ENCODE measurements at regions of chr6 and their contacts with region 1.

Region 1: DNA sequence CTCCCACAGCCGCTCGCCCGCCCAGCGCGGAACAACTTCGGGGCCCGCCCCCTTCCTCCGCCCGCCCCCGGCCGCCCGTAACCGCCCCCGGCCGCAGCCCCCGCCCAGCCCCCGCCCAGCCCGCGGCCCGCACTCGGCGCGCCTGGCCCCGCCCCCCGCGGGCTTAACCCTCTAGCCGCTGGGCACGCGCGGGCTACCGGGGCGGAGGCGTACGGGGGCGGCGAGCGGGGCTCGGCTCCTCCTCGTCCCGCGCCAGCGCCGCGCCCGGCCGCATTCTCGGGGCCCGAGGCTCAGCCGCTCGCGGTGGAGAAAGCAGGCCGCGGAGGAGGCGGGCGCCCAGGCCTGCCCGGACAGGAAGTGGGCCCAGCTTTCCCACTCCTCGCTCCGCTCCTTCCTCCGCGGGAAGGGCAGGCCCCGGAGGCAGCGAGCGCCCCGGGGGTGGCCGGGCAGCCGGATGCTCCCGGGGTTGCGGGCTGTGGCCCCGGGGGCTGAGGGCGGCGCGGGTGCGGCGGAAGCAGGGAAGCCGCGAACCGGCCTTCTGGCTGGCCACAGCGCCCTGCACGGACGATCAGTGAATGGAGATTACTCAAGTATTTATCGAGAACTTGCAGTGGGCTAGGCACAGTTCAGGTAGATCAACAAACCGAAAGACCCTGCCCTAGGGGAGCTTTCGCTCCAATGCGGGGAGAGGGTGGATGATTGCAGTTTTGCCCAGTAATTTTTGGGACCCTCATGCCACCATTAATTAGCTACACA is at the start of gene TRAM2:
- DNase-seq: peak; percentile 39 to 86 (median 63)
- H3K4me3 ChIP-seq: peak within 1 kb of the TSS; percentile 57 to 97 (median 86)
- H3K27ac ChIP-seq: peak within 1 kb of the TSS; percentile 46 to 98 (median 93)
- H3K27me3 ChIP-seq: no peaks in the 10 kb centered on the region
- CTCF ChIP-seq: peak in 18 of 56 donors; percentile 5 to 35 (median 14)
- total RNA-seq, gene TRAM2: 2.9 to 8.9 (median 5.2) TPM

Region 2: GRCh38 chr6:52650941-52651340 is 73.7 kb after region 1 on chr6:
- intact Hi-C with region 1: loop called in 1 of 2 experiments (anchors 5 kb)
- DNase-seq: no peak
- H3K4me3 ChIP-seq: no peak overlapping the region
- H3K27ac ChIP-seq: no peak overlapping the region
- H3K27me3 ChIP-seq: peaks cover 0 to 12% (median 0%) of the 10 kb centered on the region in 45 donors
- CTCF ChIP-seq: no peak

Region 3: GRCh38 chr6:52664186-52664990 is 87.2 kb after region 1 on chr6:
- intact Hi-C with region 1: loop called in 1 of 2 experiments (anchors 10 kb)
- DNase-seq: peak; percentile 65 to 94 (median 90)
- H3K4me3 ChIP-seq: peak overlapping the region; percentile 60 to 97 (median 79)
- H3K27ac ChIP-seq: peak overlapping the region in 28 of 59 donors; percentile 1 to 76 (median 50)
- H3K27me3 ChIP-seq: no peaks in the 10 kb centered on the region
- CTCF ChIP-seq: no peak

Region 4: GRCh38 chr6:52779237-52779636 is 202.0 kb after region 1 on chr6:
- intact Hi-C with region 1: no loop called
- DNase-seq: no peak
- H3K4me3 ChIP-seq: no peak overlapping the region
- H3K27ac ChIP-seq: no peak overlapping the region
- H3K27me3 ChIP-seq: peaks cover 0 to 6% (median 0%) of the 10 kb centered on the region in 45 donors
- CTCF ChIP-seq: no peak

Region 5: GRCh38 chr6:54100411-54101006 is 1523.3 kb after region 1 on chr6:
- intact Hi-C with region 1: no loop called
- DNase-seq: no peak
- H3K4me3 ChIP-seq: peak overlapping the region in 1 of 59 donors; percentile 26
- H3K27ac ChIP-seq: peak overlapping the region in 35 of 59 donors; percentile 2 to 78 (median 48)
- H3K27me3 ChIP-seq: no peaks in the 10 kb centered on the region
- CTCF ChIP-seq: no peak

Measured in dorsolateral prefrontal cortex (tissue), 120 donors.